PC-3 (cell line): ENCODE measurements at regions of chr15 and their contacts with region 1.

Region 1: GRCh38 chr15:41827880-41828806 is at the start of gene JMJD7:
- DNase-seq: peak; percentile 88
- ATAC-seq: peak; percentile 85
- H3K4me3 ChIP-seq: peak within 1 kb of the TSS; percentile 87
- H3K27ac ChIP-seq: peak within 1 kb of the TSS; percentile 47
- H3K4me1 ChIP-seq: peaks cover 25% of the 10 kb centered on the region
- H3K27me3 ChIP-seq: no peaks in the 10 kb centered on the region
- CTCF ChIP-seq: no peak
- total RNA-seq, gene JMJD7: 8.1 and 13.7 TPM in 2 replicates

Region 2: GRCh38 chr15:41659855-41660234 is 168.3 kb before region 1 on chr15:
- CTCF ChIA-PET with region 1: no interaction called
- POLR2A ChIA-PET with region 1: no interaction called
- intact Hi-C with region 1: no loop called
- DNase-seq: no peak
- ATAC-seq: no peak; the same call in 1 of the 2 replicates
- H3K4me3 ChIP-seq: peak overlapping the region; percentile 68; the same call in 1 of the 2 replicates
- H3K27ac ChIP-seq: peak overlapping the region; percentile 76; the same call in 1 of the 2 replicates
- H3K4me1 ChIP-seq: peaks cover 35% of the 10 kb centered on the region
- H3K27me3 ChIP-seq: no peaks in the 10 kb centered on the region
- CTCF ChIP-seq: no peak

Region 3: GRCh38 chr15:41894791-41895463 is 66.8 kb after region 1 on chr15:
- CTCF ChIA-PET with region 1: no interaction called
- POLR2A ChIA-PET with region 1: no interaction called
- intact Hi-C with region 1: loop called (anchors 2 kb)
- DNase-seq: peak; percentile 82
- ATAC-seq: peak; percentile 93
- H3K4me3 ChIP-seq: peak overlapping the region; percentile 53
- H3K27ac ChIP-seq: peak overlapping the region; percentile 86
- H3K4me1 ChIP-seq: peaks cover 20% of the 10 kb centered on the region
- H3K27me3 ChIP-seq: no peaks in the 10 kb centered on the region
- CTCF ChIP-seq: peak; percentile 54; the same call in 1 of the 2 replicates

Region 4: DNA sequence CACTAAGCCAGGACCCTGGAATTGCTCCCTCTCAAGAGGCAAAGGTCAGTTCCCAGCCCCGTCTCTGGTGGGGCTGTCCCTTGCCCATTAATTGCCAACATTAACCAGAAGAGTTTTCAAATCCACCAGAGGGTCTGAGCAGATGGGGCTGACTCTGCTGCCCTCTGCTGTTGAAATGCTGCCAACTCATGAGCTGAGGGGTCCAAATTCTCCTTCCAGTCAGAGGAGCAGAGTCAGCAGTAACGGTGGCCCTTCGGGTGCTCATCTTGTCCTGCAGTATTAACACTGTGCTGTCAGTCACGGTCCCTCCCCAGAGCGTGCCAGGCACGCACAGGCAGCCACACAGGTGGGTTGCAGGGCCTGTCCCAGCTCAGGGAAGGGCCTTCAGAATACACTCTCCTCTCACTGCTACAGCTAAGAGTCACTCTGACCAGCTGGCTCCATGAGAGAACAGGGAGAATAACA is 76.4 kb after region 1 on chr15:
- CTCF ChIA-PET with region 1: no interaction called
- POLR2A ChIA-PET with region 1: no interaction called
- intact Hi-C with region 1: loop called (anchors 2 kb)
- DNase-seq: peak; percentile 79
- ATAC-seq: peak; percentile 85
- H3K4me3 ChIP-seq: no peak overlapping the region
- H3K27ac ChIP-seq: no peak overlapping the region
- H3K4me1 ChIP-seq: no peaks in the 10 kb centered on the region
- H3K27me3 ChIP-seq: no peaks in the 10 kb centered on the region
- CTCF ChIP-seq: peak; percentile 91

Region 5: DNA sequence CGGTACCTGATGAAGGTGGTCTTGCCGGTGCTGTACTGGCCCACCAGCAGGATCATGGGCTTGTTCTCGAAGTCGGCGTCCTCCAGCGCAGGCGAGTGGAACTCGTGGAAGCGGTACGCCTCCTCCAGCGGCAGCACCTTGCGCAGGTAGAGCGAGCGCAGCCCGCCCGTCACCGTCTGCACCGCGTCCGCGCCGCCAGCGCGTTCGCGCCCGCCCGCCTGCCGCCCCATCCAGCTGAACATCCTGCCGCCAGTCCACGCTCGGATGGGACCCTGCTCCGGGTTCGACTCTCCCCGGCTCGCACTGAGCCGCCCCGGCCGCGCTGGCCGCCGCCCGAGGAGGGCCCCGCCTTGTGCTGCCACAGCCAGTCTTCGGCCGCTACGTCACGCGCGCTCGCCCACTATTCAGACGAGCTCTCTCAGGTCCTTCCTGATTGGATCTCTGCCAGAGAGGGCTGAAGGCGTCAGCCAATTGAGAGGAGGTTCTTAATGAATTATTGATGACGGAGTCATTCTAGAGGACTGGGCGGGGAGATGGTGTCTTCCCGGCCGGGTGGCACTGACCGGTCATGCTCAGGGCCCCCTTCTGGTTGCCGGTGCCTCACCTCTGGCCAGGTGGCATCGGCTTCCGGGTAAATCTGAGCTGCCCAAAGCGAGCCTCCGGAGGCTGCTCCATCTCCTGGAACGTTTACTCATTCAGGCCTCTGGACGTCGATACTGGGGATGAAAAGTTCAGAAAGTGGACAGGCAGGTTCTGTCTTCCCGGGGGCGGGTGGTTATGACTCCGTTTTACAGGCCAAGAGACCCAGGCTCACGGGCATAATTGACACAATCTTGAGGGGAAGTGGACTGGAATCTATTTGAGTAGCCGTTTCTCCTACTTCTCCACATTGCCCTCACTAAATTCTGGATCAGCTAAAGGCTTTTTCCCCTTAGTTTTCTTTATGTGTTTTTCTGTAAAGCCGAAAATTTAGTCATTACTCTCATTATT is 144.4 kb after region 1 on chr15 and contains the start of gene EHD4:
- CTCF ChIA-PET with region 1: no interaction called
- POLR2A ChIA-PET with region 1: interaction called, 7 read pairs
- intact Hi-C with region 1: loop called (anchors 10 kb)
- DNase-seq: peak; percentile 100
- ATAC-seq: peak; percentile 90
- H3K4me3 ChIP-seq: peak within 1 kb of the TSS; percentile 87
- H3K27ac ChIP-seq: peak within 1 kb of the TSS; percentile 79
- H3K4me1 ChIP-seq: peaks cover 30% of the 10 kb centered on the region
- H3K27me3 ChIP-seq: no peaks in the 10 kb centered on the region
- CTCF ChIP-seq: peak; percentile 61
- total RNA-seq, gene EHD4: 57.8 and 66.9 TPM in 2 replicates